ENCODE measurements at regions of chr11 and their contacts with region 1.

Region 1: GRCh38 chr11:130894322-130895025 is 21.8 kb downstream of the SNX19 start:
- DNase-seq: peak; percentile 81
- ATAC-seq: peak; percentile 92
- H3K4me3 Mint-ChIP-seq: no peak overlapping the region
- H3K27ac Mint-ChIP-seq: no peak overlapping the region
- H3K4me1 Mint-ChIP-seq: no peaks in the 10 kb centered on the region
- H3K27me3 Mint-ChIP-seq: no peaks in the 10 kb centered on the region
- CTCF ChIP-seq: peak; percentile 95

Region 2: GRCh38 chr11:130434521-130435223 is 459.8 kb before region 1 on chr11:
- CTCF ChIA-PET with region 1: interaction called, 11 read pairs
- POLR2A ChIA-PET with region 1: no interaction called
- intact Hi-C with region 1: no loop called
- DNase-seq: peak; percentile 77
- ATAC-seq: peak; percentile 83
- H3K4me3 Mint-ChIP-seq: no peak overlapping the region
- H3K27ac Mint-ChIP-seq: no peak overlapping the region
- H3K4me1 Mint-ChIP-seq: peaks cover 10% of the 10 kb centered on the region
- H3K27me3 Mint-ChIP-seq: peaks cover 16% of the 10 kb centered on the region
- CTCF ChIP-seq: peak; percentile 84

Region 3: DNA sequence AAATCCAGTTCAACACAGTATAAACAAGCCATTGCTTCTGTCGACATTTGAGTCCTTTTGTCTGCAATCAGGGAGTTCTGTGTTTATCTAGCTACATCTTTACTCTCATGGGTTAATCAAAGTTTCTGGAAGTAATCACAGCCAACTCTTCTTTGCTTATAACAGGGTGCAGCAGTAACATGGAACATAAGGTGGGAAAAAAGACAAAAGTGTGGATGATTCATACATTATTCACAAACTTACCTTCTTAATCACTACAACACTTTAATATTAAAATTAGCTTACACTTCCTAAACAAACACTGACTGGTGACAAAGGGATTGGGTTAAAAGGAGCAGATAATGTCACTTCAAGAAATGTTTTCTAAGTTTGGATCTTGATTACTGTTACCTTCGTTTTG is 22.9 kb before region 1 on chr11:
- CTCF ChIA-PET with region 1: interaction called, 10 read pairs
- POLR2A ChIA-PET with region 1: interaction called, 3 read pairs
- intact Hi-C with region 1: no loop called
- DNase-seq: no peak
- ATAC-seq: no peak
- H3K4me3 Mint-ChIP-seq: no peak overlapping the region
- H3K27ac Mint-ChIP-seq: no peak overlapping the region
- H3K4me1 Mint-ChIP-seq: peaks cover 4% of the 10 kb centered on the region
- H3K27me3 Mint-ChIP-seq: no peaks in the 10 kb centered on the region
- CTCF ChIP-seq: no peak

Region 4: GRCh38 chr11:130882138-130882551 is 12.3 kb before region 1 on chr11:
- CTCF ChIA-PET with region 1: interaction called, 29 read pairs
- POLR2A ChIA-PET with region 1: no interaction called
- intact Hi-C with region 1: no loop called
- DNase-seq: no peak
- ATAC-seq: no peak
- H3K4me3 Mint-ChIP-seq: no peak overlapping the region
- H3K27ac Mint-ChIP-seq: peak overlapping the region; percentile 4
- H3K4me1 Mint-ChIP-seq: peaks cover 11% of the 10 kb centered on the region
- H3K27me3 Mint-ChIP-seq: no peaks in the 10 kb centered on the region
- CTCF ChIP-seq: no peak

Region 5: GRCh38 chr11:130909650-130910049 is 15.2 kb after region 1 on chr11:
- CTCF ChIA-PET with region 1: interaction called, 34 read pairs
- POLR2A ChIA-PET with region 1: no interaction called
- intact Hi-C with region 1: no loop called
- DNase-seq: no peak
- ATAC-seq: no peak
- H3K4me3 Mint-ChIP-seq: no peak overlapping the region
- H3K27ac Mint-ChIP-seq: no peak overlapping the region
- H3K4me1 Mint-ChIP-seq: peaks cover 22% of the 10 kb centered on the region
- H3K27me3 Mint-ChIP-seq: no peaks in the 10 kb centered on the region
- CTCF ChIP-seq: no peak

Region 6: GRCh38 chr11:130916238-130916855 is 21.9 kb after region 1 on chr11 and contains the start of gene SNX19:
- CTCF ChIA-PET with region 1: interaction called, 34 read pairs
- POLR2A ChIA-PET with region 1: no interaction called
- intact Hi-C with region 1: no loop called
- DNase-seq: peak; percentile 89
- ATAC-seq: peak; percentile 100
- H3K4me3 Mint-ChIP-seq: peak within 1 kb of the TSS; percentile 77
- H3K27ac Mint-ChIP-seq: peak within 1 kb of the TSS; percentile 73
- H3K4me1 Mint-ChIP-seq: peaks cover 28% of the 10 kb centered on the region
- H3K27me3 Mint-ChIP-seq: no peaks in the 10 kb centered on the region
- CTCF ChIP-seq: peak; percentile 84
- total RNA-seq, gene SNX19: 20.9 to 22.7 TPM

Region 7: GRCh38 chr11:130999997-131000770 is 105.7 kb after region 1 on chr11:
- CTCF ChIA-PET with region 1: no interaction called
- POLR2A ChIA-PET with region 1: no interaction called
- intact Hi-C with region 1: no loop called
- DNase-seq: no peak
- ATAC-seq: no peak
- H3K4me3 Mint-ChIP-seq: no peak overlapping the region
- H3K27ac Mint-ChIP-seq: no peak overlapping the region
- H3K4me1 Mint-ChIP-seq: no peaks in the 10 kb centered on the region
- H3K27me3 Mint-ChIP-seq: no peaks in the 10 kb centered on the region
- CTCF ChIP-seq: no peak

Measured in activated CD8-positive, alpha-beta T cell treated with anti-CD3 and anti-CD28 coated beads for 36 hours (primary cell).